Activated CD8-positive, alpha-beta T cell treated with anti-CD3 and anti-CD28 coated beads, Interleukin-2, amount 10 ng/mL, durations not matched to agents 7 days and 5 days (primary cell): ENCODE measurements at regions of chr6 and their contacts with region 1.

Region 1: DNA sequence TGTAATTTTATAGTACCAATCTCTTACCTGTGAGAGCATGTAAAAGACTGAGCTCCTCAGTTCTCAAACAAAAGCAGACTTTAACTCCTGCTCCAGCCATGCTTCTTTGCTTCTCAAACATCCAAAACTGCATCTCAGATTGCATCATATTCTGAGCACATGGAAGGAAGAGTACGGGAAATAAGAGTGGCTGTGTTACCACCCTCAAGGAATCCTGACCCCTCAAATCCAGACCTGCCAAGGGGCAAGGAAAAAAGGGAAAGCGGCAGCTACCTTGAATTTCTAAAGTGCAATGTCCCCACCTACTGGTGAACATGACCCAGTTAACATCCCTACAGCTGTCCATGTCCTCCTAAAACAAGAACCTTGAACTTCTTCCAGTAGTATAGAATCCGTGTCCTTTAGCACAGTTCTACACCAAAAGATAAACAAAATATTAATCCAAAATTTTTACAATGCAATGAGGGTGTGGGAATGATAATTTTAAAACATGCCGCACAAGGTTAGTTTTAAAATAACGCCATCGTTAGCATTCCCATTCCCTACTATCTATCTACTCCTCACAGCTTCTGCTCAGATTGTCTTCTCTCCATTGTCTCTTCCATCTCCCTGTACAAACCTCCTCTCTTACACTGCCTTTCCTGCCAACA is 34.1 kb upstream of the HLA-DQB1 start:
- DNase-seq: peak; percentile 47
- ATAC-seq: peak; percentile 69
- H3K4me3 Mint-ChIP-seq: no peak overlapping the region
- H3K27ac Mint-ChIP-seq: no peak overlapping the region
- H3K4me1 Mint-ChIP-seq: peaks cover 2% of the 10 kb centered on the region
- H3K27me3 Mint-ChIP-seq: peaks cover 60% of the 10 kb centered on the region

Region 2: GRCh38 chr6:32424589-32425300 is 275.8 kb before region 1 on chr6:
- CTCF ChIA-PET with region 1: interaction called, 14 read pairs
- POLR2A ChIA-PET with region 1: no interaction called
- DNase-seq: no peak
- ATAC-seq: no peak
- H3K4me3 Mint-ChIP-seq: no peak overlapping the region
- H3K27ac Mint-ChIP-seq: no peak overlapping the region
- H3K4me1 Mint-ChIP-seq: no peaks in the 10 kb centered on the region
- H3K27me3 Mint-ChIP-seq: peaks cover 39% of the 10 kb centered on the region

Region 3: DNA sequence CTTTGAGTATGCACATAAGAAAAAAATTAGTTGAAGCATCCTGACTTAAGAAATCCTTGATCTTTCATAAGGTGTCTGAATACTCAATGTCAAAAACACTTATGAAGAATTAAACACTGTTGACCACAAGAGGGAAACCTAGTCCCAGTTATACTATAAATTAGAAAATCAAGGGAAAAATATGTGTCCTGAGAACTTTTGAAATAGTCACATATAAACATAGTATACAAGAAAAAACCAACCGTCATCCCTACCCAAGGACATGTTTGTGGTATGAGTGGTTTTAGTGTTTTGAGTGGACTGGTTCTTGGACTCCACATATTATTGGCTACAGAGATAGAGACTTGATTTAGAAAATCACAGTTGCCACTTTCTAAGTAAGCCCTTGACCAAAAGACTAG is 268.5 kb before region 1 on chr6:
- CTCF ChIA-PET with region 1: interaction called, 23 read pairs
- POLR2A ChIA-PET with region 1: no interaction called
- DNase-seq: no peak
- ATAC-seq: no peak
- H3K4me3 Mint-ChIP-seq: no peak overlapping the region
- H3K27ac Mint-ChIP-seq: no peak overlapping the region
- H3K4me1 Mint-ChIP-seq: no peaks in the 10 kb centered on the region
- H3K27me3 Mint-ChIP-seq: peaks cover 27% of the 10 kb centered on the region

Region 4: DNA sequence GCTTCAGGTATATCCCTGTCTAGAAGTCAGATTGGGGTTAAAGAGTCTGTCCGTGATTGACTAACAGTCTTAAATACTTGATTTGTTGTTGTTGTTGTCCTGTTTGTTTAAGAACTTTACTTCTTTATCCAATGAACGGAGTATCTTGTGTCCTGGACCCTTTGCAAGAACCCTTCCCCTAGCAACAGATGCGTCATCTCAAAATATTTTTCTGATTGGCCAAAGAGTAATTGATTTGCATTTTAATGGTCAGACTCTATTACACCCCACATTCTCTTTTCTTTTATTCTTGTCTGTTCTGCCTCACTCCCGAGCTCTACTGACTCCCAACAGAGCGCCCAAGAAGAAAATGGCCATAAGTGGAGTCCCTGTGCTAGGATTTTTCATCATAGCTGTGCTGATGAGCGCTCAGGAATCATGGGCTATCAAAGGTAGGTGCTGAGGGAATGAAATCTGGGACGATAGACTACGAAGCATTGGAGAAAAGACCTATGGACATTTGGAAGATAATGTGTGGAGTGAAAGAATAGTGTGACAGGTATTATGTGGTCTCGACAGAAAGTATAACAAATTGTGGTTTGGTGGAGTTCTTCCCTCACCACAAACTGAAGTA is 260.8 kb before region 1 on chr6 and contains the start of gene HLA-DRA:
- CTCF ChIA-PET with region 1: interaction called, 13 read pairs
- POLR2A ChIA-PET with region 1: no interaction called
- DNase-seq: peak; percentile 63
- ATAC-seq: peak; percentile 91
- H3K4me3 Mint-ChIP-seq: peak within 1 kb of the TSS; percentile 70
- H3K27ac Mint-ChIP-seq: peak within 1 kb of the TSS; percentile 63
- H3K4me1 Mint-ChIP-seq: peaks cover 18% of the 10 kb centered on the region
- H3K27me3 Mint-ChIP-seq: peaks cover 32% of the 10 kb centered on the region
- total RNA-seq, gene HLA-DRA: 30.9 to 31.3 TPM

Region 5: GRCh38 chr6:32622545-32623401 is 77.7 kb before region 1 on chr6:
- CTCF ChIA-PET with region 1: interaction called, 13 read pairs
- POLR2A ChIA-PET with region 1: no interaction called
- DNase-seq: peak; percentile 63
- ATAC-seq: peak; percentile 80
- H3K4me3 Mint-ChIP-seq: peak overlapping the region; percentile 64
- H3K27ac Mint-ChIP-seq: peak overlapping the region; percentile 98
- H3K4me1 Mint-ChIP-seq: peaks cover 50% of the 10 kb centered on the region
- H3K27me3 Mint-ChIP-seq: no peaks in the 10 kb centered on the region

Region 6: GRCh38 chr6:32785781-32786533 is 85.4 kb after region 1 on chr6:
- CTCF ChIA-PET with region 1: interaction called, 37 read pairs
- POLR2A ChIA-PET with region 1: no interaction called
- DNase-seq: peak; percentile 54
- ATAC-seq: peak; percentile 93
- H3K4me3 Mint-ChIP-seq: no peak overlapping the region
- H3K27ac Mint-ChIP-seq: no peak overlapping the region
- H3K4me1 Mint-ChIP-seq: no peaks in the 10 kb centered on the region
- H3K27me3 Mint-ChIP-seq: peaks cover 52% of the 10 kb centered on the region

Region 7: GRCh38 chr6:32796848-32797776 is 96.6 kb after region 1 on chr6:
- CTCF ChIA-PET with region 1: interaction called, 17 read pairs
- POLR2A ChIA-PET with region 1: no interaction called
- DNase-seq: peak; percentile 83
- ATAC-seq: peak; percentile 73
- H3K4me3 Mint-ChIP-seq: peak overlapping the region; percentile 57
- H3K27ac Mint-ChIP-seq: peak overlapping the region; percentile 33
- H3K4me1 Mint-ChIP-seq: peaks cover 37% of the 10 kb centered on the region
- H3K27me3 Mint-ChIP-seq: peaks cover 40% of the 10 kb centered on the region

Region 8: DNA sequence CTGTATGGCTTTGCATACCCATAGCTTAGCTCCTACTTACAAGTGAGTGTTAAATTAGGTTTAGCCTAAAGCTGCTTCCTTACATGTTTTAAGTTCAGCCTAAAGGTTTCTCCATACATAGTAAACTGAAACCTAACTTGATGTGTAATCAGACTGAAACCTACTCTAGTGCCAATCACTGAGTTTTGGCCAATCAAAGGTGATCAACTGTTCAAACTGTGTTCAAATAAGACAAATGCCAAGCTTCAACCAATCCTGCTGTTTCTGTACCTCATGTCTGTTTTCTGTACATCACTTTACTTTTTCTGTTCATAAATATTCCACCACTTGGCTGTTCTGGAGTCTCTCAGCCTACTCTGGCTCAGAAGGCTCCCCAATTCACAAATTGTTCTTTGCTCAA is 288.9 kb after region 1 on chr6:
- CTCF ChIA-PET with region 1: no interaction called
- POLR2A ChIA-PET with region 1: no interaction called
- DNase-seq: no peak
- ATAC-seq: no peak
- H3K4me3 Mint-ChIP-seq: no peak overlapping the region
- H3K27ac Mint-ChIP-seq: no peak overlapping the region
- H3K4me1 Mint-ChIP-seq: peaks cover 6% of the 10 kb centered on the region
- H3K27me3 Mint-ChIP-seq: peaks cover 21% of the 10 kb centered on the region